Posterior vena cava (tissue), 2 donors: ENCODE measurements at regions of chr5 and their contacts with region 1.

Region 1: DNA sequence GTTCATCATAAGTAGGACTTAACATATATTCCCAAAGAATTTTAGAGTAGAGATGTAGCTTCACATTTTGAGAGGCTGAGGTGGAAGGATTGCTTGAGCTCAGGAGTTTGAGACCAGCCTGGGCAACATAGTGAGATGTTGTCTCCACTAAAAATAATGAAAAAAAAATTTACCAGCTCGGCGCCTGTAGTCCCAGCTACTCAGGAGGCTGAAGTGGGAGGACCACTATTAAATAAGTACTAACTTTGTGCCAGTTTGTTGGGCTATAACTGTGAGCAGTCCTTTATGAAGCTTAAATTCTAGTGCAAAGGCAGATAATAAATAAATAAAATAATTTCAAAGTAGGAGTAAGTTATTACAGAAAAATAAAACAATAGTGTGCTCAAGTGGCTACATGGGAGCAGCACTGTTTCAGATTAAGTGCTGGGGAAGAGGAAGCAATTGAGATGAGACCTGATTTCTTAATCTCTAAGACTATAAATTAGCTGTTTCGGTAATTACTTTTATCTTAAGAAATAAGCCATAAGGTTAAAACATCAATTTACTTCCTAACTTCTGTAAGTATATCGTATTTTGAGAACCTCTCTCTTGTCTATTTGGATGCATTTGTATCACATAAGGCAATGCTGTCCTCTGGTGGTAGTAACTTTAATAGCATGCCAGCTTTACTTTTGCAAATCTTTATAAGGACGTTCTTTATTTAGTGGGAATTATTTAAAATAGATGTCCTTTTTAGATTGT is 98.9 kb downstream of the CSNK1G3 start:
- DNase-seq: no peak

Region 2: GRCh38 chr5:123429221-123429954 is 181.4 kb before region 1 on chr5:
- intact Hi-C with region 1: loop called in 1 of 2 experiments (anchors 5 kb)
- DNase-seq: no peak